ENCODE measurements at regions of chr4 and their contacts with region 1.

Region 1: GRCh38 chr4:184100297-184100885 is 117.3 kb downstream of the ENPP6 start:
- DNase-seq: peak; percentile 50 to 77 (median 56)
- ATAC-seq: peak; percentile 73
- H3K4me3 ChIP-seq: no peak overlapping the region
- H3K4me1 ChIP-seq: no peaks in the 10 kb centered on the region
- CTCF ChIP-seq: peak; percentile 88

Region 2: GRCh38 chr4:183840311-183840710 is 260.1 kb before region 1 on chr4:
- intact Hi-C with region 1: loop called (anchors 1 to 10 kb)
- DNase-seq: peak in 2 of 3 donors; percentile 78 to 91
- ATAC-seq: peak; percentile 76
- H3K4me3 ChIP-seq: no peak overlapping the region
- H3K4me1 ChIP-seq: no peaks in the 10 kb centered on the region
- CTCF ChIP-seq: peak; percentile 39

Region 3: GRCh38 chr4:183960046-183960420 is 140.4 kb before region 1 on chr4:
- intact Hi-C with region 1: no loop called
- DNase-seq: peak in 2 of 3 donors; percentile 43 to 56
- ATAC-seq: peak; percentile 88
- H3K4me3 ChIP-seq: no peak overlapping the region
- H3K4me1 ChIP-seq: peaks cover 13% of the 10 kb centered on the region
- CTCF ChIP-seq: no peak

Region 4: GRCh38 chr4:184882271-184882670 is 781.9 kb after region 1 on chr4:
- intact Hi-C with region 1: no loop called
- DNase-seq: no peak
- ATAC-seq: no peak
- H3K4me3 ChIP-seq: no peak overlapping the region
- H3K4me1 ChIP-seq: no peaks in the 10 kb centered on the region
- CTCF ChIP-seq: no peak

Measured in mucosa of descending colon (tissue), 3 donors.